HepG2 (cell line): ENCODE measurements at regions of chr9 and their contacts with region 1.

Region 1: GRCh38 chr9:37415011-37415719 is 7.3 kb upstream of the GRHPR start:
- DNase-seq: peak; percentile 76
- ATAC-seq: peak; percentile 42
- H3K4me3 ChIP-seq: peak overlapping the region; percentile 7 to 51 (median 29); a peak in 4 of 6 replicates
- H3K27ac ChIP-seq: no peak overlapping the region
- H3K4me1 ChIP-seq: peaks cover 76% of the 10 kb centered on the region
- H3K27me3 ChIP-seq: no peaks in the 10 kb centered on the region
- CTCF ChIP-seq: peak; percentile 90
- EP300 ChIP-seq: no peak
- POLR2A ChIP-seq: no peak
- RAD21 ChIP-seq: peak; percentile 50; the same call in 1 of the 2 replicates

Region 2: GRCh38 chr9:36866840-36867239 is 548.3 kb before region 1 on chr9:
- CTCF ChIA-PET with region 1: no interaction called
- POLR2A ChIA-PET with region 1: no interaction called
- in situ Hi-C with region 1: no loop called
- intact Hi-C with region 1: loop called (anchors 5 kb)
- DNase-seq: peak; percentile 18
- ATAC-seq: peak; percentile 45
- H3K4me3 ChIP-seq: no peak overlapping the region
- H3K27ac ChIP-seq: no peak overlapping the region
- H3K4me1 ChIP-seq: peaks cover 67% of the 10 kb centered on the region
- H3K27me3 ChIP-seq: peaks cover 2 to 50% of the 10 kb centered on the region in 2 experiments; a peak in 4 of 5 replicates
- CTCF ChIP-seq: peak; percentile 25
- EP300 ChIP-seq: no peak
- POLR2A ChIP-seq: no peak
- RAD21 ChIP-seq: no peak

Region 3: GRCh38 chr9:37430841-37431597 is 15.9 kb after region 1 on chr9:
- CTCF ChIA-PET with region 1: interaction called, 6 read pairs
- POLR2A ChIA-PET with region 1: interaction called, 16 read pairs
- in situ Hi-C with region 1: no loop called
- intact Hi-C with region 1: loop called (anchors 2 kb)
- DNase-seq: peak; percentile 83
- ATAC-seq: peak; percentile 95
- H3K4me3 ChIP-seq: no peak overlapping the region
- H3K27ac ChIP-seq: peak overlapping the region; percentile 63
- H3K4me1 ChIP-seq: peaks cover 32% of the 10 kb centered on the region
- H3K27me3 ChIP-seq: no peaks in the 10 kb centered on the region
- CTCF ChIP-seq: peak; percentile 74
- EP300 ChIP-seq: no peak
- POLR2A ChIP-seq: peak in 1 of 2 experiments; percentile 15; a peak in 2 of 4 replicates
- RAD21 ChIP-seq: peak; percentile 72

Region 4: GRCh38 chr9:37465249-37466036 is 50.3 kb after region 1 on chr9 and contains the start of gene ZBTB5:
- CTCF ChIA-PET with region 1: no interaction called
- POLR2A ChIA-PET with region 1: interaction called, 20 read pairs
- in situ Hi-C with region 1: no loop called
- intact Hi-C with region 1: no loop called
- DNase-seq: peak; percentile 100
- ATAC-seq: peak; percentile 87
- H3K4me3 ChIP-seq: peak within 1 kb of the TSS; percentile 79 to 95 (median 87)
- H3K27ac ChIP-seq: peak within 1 kb of the TSS; percentile 95
- H3K4me1 ChIP-seq: peaks cover 36% of the 10 kb centered on the region
- H3K27me3 ChIP-seq: no peaks in the 10 kb centered on the region; a peak in 1 of 5 replicates
- CTCF ChIP-seq: no peak
- EP300 ChIP-seq: peak in 1 of 2 experiments; percentile 4; a peak in 1 of 4 replicates
- POLR2A ChIP-seq: peak; percentile 76 to 84
- RAD21 ChIP-seq: no peak
- total RNA-seq, gene ZBTB5: 12.5 and 15.2 TPM in 2 replicates